ENCODE measurements at regions of chr10 and their contacts with region 1.

Region 1: DNA sequence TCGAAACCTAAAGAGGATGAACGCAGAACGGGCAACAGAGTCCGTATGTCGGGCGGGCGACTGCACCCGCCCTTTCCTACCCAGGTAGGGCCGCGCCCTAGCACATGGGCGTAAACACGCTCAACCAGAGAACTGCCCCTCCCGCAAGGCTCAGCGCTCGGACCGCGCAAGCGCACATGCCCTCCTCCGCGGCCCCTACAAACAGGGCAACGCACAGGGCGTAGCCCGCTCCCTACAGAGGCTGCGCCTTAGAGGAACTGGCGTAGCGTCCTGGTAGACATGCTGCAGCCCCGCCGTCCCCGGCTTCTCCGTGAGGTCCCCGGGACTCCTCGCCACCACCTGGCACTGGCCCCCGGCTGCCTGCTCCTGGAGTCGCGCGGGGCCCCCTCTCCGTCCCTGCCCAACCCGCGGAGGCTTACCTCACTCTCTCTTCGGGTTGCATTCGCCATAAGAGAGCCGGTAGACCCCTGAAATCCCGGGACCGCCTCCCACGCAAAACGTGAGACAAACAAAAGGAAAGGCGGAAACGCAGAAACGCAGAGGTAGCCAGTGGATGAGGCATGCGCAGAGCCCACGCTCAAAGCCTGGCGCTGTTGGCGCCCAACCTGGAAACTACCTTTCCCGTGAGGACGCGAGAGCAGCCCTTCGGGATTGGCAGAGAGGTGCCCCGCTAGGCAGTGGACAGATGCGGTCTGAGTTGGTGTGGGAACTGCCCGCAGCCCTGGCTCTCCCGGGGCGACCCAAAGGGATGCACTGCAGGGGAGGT is at the start of gene ZNF33B:
- DNase-seq: peak; percentile 92
- ATAC-seq: peak; percentile 98
- H3K4me3 ChIP-seq: peak within 1 kb of the TSS; percentile 89
- H3K27ac ChIP-seq: peak within 1 kb of the TSS; percentile 95
- H3K4me1 ChIP-seq: no peaks in the 10 kb centered on the region
- H3K27me3 ChIP-seq: no peaks in the 10 kb centered on the region
- CTCF ChIP-seq: no peak
- EP300 ChIP-seq: peak in 1 of 2 experiments; percentile 12; a peak in 1 of 4 replicates
- POLR2A ChIP-seq: peak; percentile 97
- RAD21 ChIP-seq: no peak
- polyA plus RNA-seq, gene ZNF33B: 5.3 to 6.2 TPM

Region 2: GRCh38 chr10:42552493-42553407 is 85.5 kb before region 1 on chr10:
- CTCF ChIA-PET with region 1: interaction called, 3 read pairs
- POLR2A ChIA-PET with region 1: interaction called, 3 read pairs
- RAD21 ChIA-PET with region 1: no interaction called
- SMC1A ChIA-PET with region 1: no interaction called
- in situ Hi-C with region 1: no loop called
- intact Hi-C with region 1: loop called (anchors 1 kb)
- DNase-seq: peak; percentile 89
- ATAC-seq: peak; percentile 93
- H3K4me3 ChIP-seq: peak overlapping the region; percentile 84
- H3K27ac ChIP-seq: peak overlapping the region; percentile 69
- H3K4me1 ChIP-seq: no peaks in the 10 kb centered on the region; the same call in 1 of the 2 replicates
- H3K27me3 ChIP-seq: no peaks in the 10 kb centered on the region
- CTCF ChIP-seq: no peak
- EP300 ChIP-seq: no peak
- POLR2A ChIP-seq: no peak
- RAD21 ChIP-seq: no peak

Region 3: GRCh38 chr10:42594246-42594650 is 44.0 kb before region 1 on chr10:
- CTCF ChIA-PET with region 1: no interaction called
- POLR2A ChIA-PET with region 1: no interaction called
- RAD21 ChIA-PET with region 1: no interaction called
- SMC1A ChIA-PET with region 1: no interaction called
- in situ Hi-C with region 1: no loop called
- intact Hi-C with region 1: no loop called
- DNase-seq: no peak
- ATAC-seq: no peak
- H3K4me3 ChIP-seq: no peak overlapping the region
- H3K27ac ChIP-seq: no peak overlapping the region
- H3K4me1 ChIP-seq: no peaks in the 10 kb centered on the region
- H3K27me3 ChIP-seq: no peaks in the 10 kb centered on the region
- CTCF ChIP-seq: no peak
- EP300 ChIP-seq: no peak
- POLR2A ChIP-seq: no peak
- RAD21 ChIP-seq: no peak

Region 4: DNA sequence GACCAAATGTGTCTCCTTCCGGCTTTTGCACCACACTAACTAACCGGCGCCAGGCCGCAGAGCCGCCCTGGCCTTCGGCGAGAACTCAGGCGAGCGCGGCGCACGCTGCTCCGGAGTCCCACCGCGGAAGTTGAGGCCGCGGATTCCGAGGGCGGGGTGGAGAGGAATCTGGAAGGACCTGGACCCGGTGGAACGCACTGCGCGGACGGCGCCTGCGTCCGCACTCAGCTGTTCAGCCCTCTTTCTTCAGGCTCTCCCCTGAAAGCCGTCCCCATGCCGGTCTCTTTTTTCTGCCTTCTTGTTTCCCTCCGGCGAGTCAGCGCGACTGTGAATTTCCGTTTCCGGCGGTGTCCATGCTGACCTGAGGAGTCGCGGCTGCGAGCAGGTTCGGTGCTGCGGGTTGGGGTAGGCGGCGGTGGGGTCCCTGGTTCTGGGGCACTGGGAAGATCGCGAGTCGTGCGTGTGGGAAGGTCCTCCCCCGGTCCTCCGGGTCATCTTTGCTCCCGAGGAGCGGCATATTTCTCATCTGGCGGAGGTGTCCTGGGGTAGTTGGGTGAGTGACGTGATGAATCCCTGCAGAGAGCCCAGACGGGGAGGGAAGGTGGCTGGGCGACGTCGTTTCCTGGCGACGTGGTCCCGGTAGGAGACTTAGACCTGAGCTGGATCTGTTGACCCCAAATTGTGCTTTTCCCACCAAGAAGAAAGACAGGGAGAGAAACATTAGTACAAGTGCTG is 144.4 kb after region 1 on chr10 and contains the start of gene BMS1:
- CTCF ChIA-PET with region 1: no interaction called
- POLR2A ChIA-PET with region 1: no interaction called
- RAD21 ChIA-PET with region 1: no interaction called
- SMC1A ChIA-PET with region 1: no interaction called
- in situ Hi-C with region 1: no loop called
- intact Hi-C with region 1: loop called (anchors 2 kb)
- DNase-seq: peak; percentile 77
- ATAC-seq: peak; percentile 92
- H3K4me3 ChIP-seq: peak within 1 kb of the TSS; percentile 81
- H3K27ac ChIP-seq: peak within 1 kb of the TSS; percentile 87
- H3K4me1 ChIP-seq: no peaks in the 10 kb centered on the region
- H3K27me3 ChIP-seq: no peaks in the 10 kb centered on the region
- CTCF ChIP-seq: no peak
- EP300 ChIP-seq: peak in 1 of 2 experiments; percentile 48; a peak in 1 of 4 replicates
- POLR2A ChIP-seq: peak; percentile 94
- RAD21 ChIP-seq: no peak
- polyA plus RNA-seq, gene BMS1: 10.1 to 16.8 TPM

Measured in GM12878 (cell line).